Psoas muscle (tissue), 8 donors: ENCODE measurements at regions of chr16 and their contacts with region 1.

Region 1: DNA sequence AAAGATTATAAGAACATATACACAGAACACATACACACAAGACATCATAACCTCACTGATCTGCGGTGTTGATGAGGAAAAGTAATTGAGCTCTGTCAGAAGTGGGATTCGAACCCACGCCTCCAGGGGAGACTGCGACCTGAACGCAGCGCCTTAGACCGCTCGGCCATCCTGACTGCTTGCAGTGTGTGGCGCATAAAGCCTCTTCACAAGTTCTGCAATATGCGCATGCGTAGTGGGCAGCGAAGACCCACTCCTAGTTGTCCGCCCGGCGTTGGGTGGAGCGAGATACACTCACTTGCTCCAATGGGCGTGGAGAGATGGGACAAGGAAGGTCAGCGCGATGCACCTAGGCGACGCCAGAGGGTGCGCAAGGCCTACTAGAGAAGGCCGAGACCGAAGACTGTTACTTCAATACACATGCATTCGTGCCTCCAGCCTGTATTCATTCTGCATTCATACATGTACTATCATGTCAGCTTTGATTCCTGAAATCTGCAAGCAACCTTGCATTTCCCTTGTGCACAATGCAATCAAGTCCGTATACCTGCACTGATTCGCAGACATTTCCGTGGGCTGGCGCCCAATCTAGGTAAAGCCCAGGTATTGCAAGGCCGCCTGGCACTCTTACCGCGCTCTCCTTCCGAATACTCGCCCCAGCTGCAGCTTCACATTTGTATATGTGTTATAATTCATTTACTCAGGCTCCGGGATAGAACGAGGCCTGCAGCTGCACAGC is 16.1 kb upstream of the PLLP start:
- DNase-seq: peak; percentile 98 to 99
- ATAC-seq: peak; percentile 94 to 95 (median 94)
- H3K4me3 ChIP-seq: peak overlapping the region; percentile 62
- H3K27ac ChIP-seq: peak overlapping the region; percentile 84
- H3K4me1 ChIP-seq: peaks cover 15% of the 10 kb centered on the region
- H3K27me3 ChIP-seq: no peaks in the 10 kb centered on the region
- CTCF ChIP-seq: peak; percentile 96

Region 2: DNA sequence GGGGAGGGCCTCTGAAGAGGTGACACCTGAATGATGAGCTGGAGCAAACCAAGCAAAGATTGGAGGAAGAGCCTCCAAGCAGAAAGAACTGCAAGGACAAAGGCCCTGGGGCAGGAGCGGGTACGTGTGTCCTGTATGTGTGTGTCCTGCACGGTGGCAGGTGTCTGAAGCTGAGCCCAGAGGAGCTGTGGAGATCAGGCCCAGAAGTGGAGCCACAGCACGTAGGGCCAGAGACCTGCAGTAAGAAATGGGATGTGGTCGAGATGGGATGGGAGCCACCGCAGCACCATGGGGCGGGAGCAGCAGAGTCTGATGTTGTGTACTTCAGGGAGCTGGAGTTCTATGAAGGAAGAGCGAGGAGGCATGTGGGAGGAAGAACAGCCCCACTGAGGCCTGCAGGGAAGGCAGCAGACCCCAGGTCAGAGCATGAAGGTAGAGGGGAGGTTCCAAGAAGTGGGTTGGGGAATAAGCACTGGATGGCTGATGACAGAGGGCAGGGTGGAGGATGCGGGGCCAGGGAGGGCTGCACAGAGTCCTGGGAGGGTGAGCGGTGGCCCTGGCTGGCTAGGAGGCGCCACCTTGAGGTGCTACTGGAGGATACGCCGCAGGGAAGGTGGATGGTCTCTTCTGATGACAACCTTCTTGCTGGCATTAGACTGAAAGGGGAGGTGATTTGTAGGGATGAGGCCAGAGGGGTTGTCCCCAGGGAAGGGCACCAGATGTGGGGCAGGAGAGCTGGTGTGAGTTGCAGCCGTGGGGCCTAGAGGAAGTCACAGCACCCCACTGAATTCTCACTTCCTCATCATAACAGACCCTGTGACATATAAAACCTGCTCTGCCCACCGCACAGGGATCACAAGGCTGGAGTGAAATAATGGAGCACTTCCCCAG is 349.4 kb before region 1 on chr16:
- intact Hi-C with region 1: no loop called
- DNase-seq: no peak
- ATAC-seq: peak; percentile 67 to 82 (median 70)
- H3K4me3 ChIP-seq: no peak overlapping the region
- H3K27ac ChIP-seq: no peak overlapping the region
- H3K4me1 ChIP-seq: no peaks in the 10 kb centered on the region
- H3K27me3 ChIP-seq: no peaks in the 10 kb centered on the region
- CTCF ChIP-seq: peak; percentile 47

Region 3: GRCh38 chr16:57422026-57422944 is 121.7 kb after region 1 on chr16:
- intact Hi-C with region 1: loop called (anchors 1 kb)
- DNase-seq: no peak
- ATAC-seq: peak in 2 of 4 donors; percentile 46 to 52
- H3K4me3 ChIP-seq: no peak overlapping the region
- H3K27ac ChIP-seq: no peak overlapping the region
- H3K4me1 ChIP-seq: peaks cover 14% of the 10 kb centered on the region
- H3K27me3 ChIP-seq: no peaks in the 10 kb centered on the region
- CTCF ChIP-seq: peak; percentile 48